B cell (primary cell): ENCODE measurements at regions of chr13 and their contacts with region 1.

Region 1: GRCh38 chr13:30355384-30355699 is 48.0 kb upstream of the KATNAL1 start:
- DNase-seq: peak; percentile 83
- ATAC-seq: peak; percentile 96
- H3K4me3 ChIP-seq: peak overlapping the region in 1 of 5 experiments; percentile 12
- H3K4me3 Mint-ChIP-seq: peak overlapping the region; percentile 72
- H3K27ac ChIP-seq: no peak overlapping the region
- H3K27ac Mint-ChIP-seq: peak overlapping the region; percentile 60
- H3K4me1 ChIP-seq: peaks cover 21 to 32% of the 10 kb centered on the region in 2 donors
- H3K4me1 Mint-ChIP-seq: peaks cover 30% of the 10 kb centered on the region
- H3K27me3 ChIP-seq: no peaks in the 10 kb centered on the region
- H3K27me3 Mint-ChIP-seq: no peaks in the 10 kb centered on the region
- CTCF ChIP-seq: peak; percentile 79

Region 2: GRCh38 chr13:29902101-29902952 is 453.0 kb before region 1 on chr13:
- CTCF ChIA-PET with region 1: no interaction called
- POLR2A ChIA-PET with region 1: no interaction called
- intact Hi-C with region 1: no loop called
- DNase-seq: no peak
- ATAC-seq: no peak
- H3K4me3 ChIP-seq: no peak overlapping the region
- H3K4me3 Mint-ChIP-seq: no peak overlapping the region
- H3K27ac ChIP-seq: no peak overlapping the region
- H3K27ac Mint-ChIP-seq: no peak overlapping the region
- H3K4me1 ChIP-seq: no peaks in the 10 kb centered on the region
- H3K4me1 Mint-ChIP-seq: peaks cover 5% of the 10 kb centered on the region
- H3K27me3 ChIP-seq: peaks cover 0 to 3% (median 0%) of the 10 kb centered on the region in 4 experiments
- H3K27me3 Mint-ChIP-seq: peaks cover 32% of the 10 kb centered on the region
- CTCF ChIP-seq: no peak

Region 3: GRCh38 chr13:30306762-30307193 is 48.6 kb before region 1 on chr13:
- CTCF ChIA-PET with region 1: no interaction called
- POLR2A ChIA-PET with region 1: interaction called, 3 read pairs
- intact Hi-C with region 1: loop called (anchors 2 kb)
- DNase-seq: peak; percentile 96
- ATAC-seq: peak; percentile 89
- H3K4me3 ChIP-seq: peak overlapping the region; percentile 70 to 97 (median 83)
- H3K4me3 Mint-ChIP-seq: peak overlapping the region; percentile 85
- H3K27ac ChIP-seq: peak overlapping the region; percentile 71 to 87
- H3K27ac Mint-ChIP-seq: peak overlapping the region; percentile 86
- H3K4me1 ChIP-seq: peaks cover 28 to 45% of the 10 kb centered on the region in 2 donors
- H3K4me1 Mint-ChIP-seq: peaks cover 55% of the 10 kb centered on the region
- H3K27me3 ChIP-seq: no peaks in the 10 kb centered on the region
- H3K27me3 Mint-ChIP-seq: no peaks in the 10 kb centered on the region
- CTCF ChIP-seq: no peak

Region 4: GRCh38 chr13:30395192-30396084 is 40.1 kb after region 1 on chr13:
- CTCF ChIA-PET with region 1: interaction called, 7 read pairs
- POLR2A ChIA-PET with region 1: no interaction called
- intact Hi-C with region 1: loop called (anchors 1 kb)
- DNase-seq: peak; percentile 86
- ATAC-seq: peak; percentile 79
- H3K4me3 ChIP-seq: peak overlapping the region; percentile 62 to 96 (median 77)
- H3K4me3 Mint-ChIP-seq: peak overlapping the region; percentile 98
- H3K27ac ChIP-seq: peak overlapping the region; percentile 92
- H3K27ac Mint-ChIP-seq: peak overlapping the region; percentile 99
- H3K4me1 ChIP-seq: peaks cover 10 to 15% of the 10 kb centered on the region in 2 donors
- H3K4me1 Mint-ChIP-seq: peaks cover 24% of the 10 kb centered on the region
- H3K27me3 ChIP-seq: no peaks in the 10 kb centered on the region
- H3K27me3 Mint-ChIP-seq: no peaks in the 10 kb centered on the region
- CTCF ChIP-seq: no peak

Region 5: GRCh38 chr13:30422054-30422839 is 66.9 kb after region 1 on chr13 and contains the start of gene UBE2L5:
- CTCF ChIA-PET with region 1: interaction called, 6 read pairs
- POLR2A ChIA-PET with region 1: interaction called, 3 read pairs
- intact Hi-C with region 1: loop called (anchors 2 kb)
- DNase-seq: peak; percentile 85
- ATAC-seq: peak; percentile 93
- H3K4me3 ChIP-seq: peak within 1 kb of the TSS; percentile 57 to 83 (median 77)
- H3K4me3 Mint-ChIP-seq: peak within 1 kb of the TSS; percentile 92
- H3K27ac ChIP-seq: peak within 1 kb of the TSS; percentile 45 to 71
- H3K27ac Mint-ChIP-seq: peak within 1 kb of the TSS; percentile 90
- H3K4me1 ChIP-seq: peaks cover 18 to 42% of the 10 kb centered on the region in 2 donors
- H3K4me1 Mint-ChIP-seq: peaks cover 47% of the 10 kb centered on the region
- H3K27me3 ChIP-seq: no peaks in the 10 kb centered on the region
- H3K27me3 Mint-ChIP-seq: no peaks in the 10 kb centered on the region
- CTCF ChIP-seq: no peak
- total RNA-seq, gene UBE2L5: 0.57 and 0.58 TPM in 2 replicates

Region 6: DNA sequence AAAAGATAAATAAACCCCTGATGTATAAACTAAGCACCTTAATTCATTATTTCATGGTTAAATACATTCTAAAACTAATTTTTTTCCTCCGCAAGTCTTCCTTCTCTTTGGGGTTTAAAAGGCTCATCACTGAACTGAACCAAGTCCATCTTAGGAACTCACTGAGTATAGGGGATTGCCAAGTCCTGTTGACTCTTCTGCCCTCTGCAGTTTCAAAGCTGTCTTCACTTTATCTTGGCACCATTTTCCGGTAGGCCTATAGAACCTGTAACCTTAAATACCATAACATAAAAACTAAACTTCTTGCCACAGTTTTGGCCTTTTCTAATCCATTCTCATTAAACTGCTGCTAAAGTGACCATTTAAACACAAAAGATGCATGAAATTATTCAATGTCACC is 195.8 kb after region 1 on chr13:
- CTCF ChIA-PET with region 1: interaction called, 3 read pairs
- POLR2A ChIA-PET with region 1: no interaction called
- intact Hi-C with region 1: loop called (anchors 1 kb)
- DNase-seq: peak; percentile 64
- ATAC-seq: peak; percentile 84
- H3K4me3 ChIP-seq: no peak overlapping the region
- H3K4me3 Mint-ChIP-seq: no peak overlapping the region
- H3K27ac ChIP-seq: no peak overlapping the region
- H3K27ac Mint-ChIP-seq: no peak overlapping the region
- H3K4me1 ChIP-seq: peaks cover 8% of the 10 kb centered on the region in 2 donors
- H3K4me1 Mint-ChIP-seq: peaks cover 7% of the 10 kb centered on the region
- H3K27me3 ChIP-seq: no peaks in the 10 kb centered on the region
- H3K27me3 Mint-ChIP-seq: no peaks in the 10 kb centered on the region
- CTCF ChIP-seq: peak; percentile 61

Region 7: GRCh38 chr13:30572859-30573275 is 217.5 kb after region 1 on chr13:
- CTCF ChIA-PET with region 1: no interaction called
- POLR2A ChIA-PET with region 1: no interaction called
- intact Hi-C with region 1: loop called (anchors 1 kb)
- DNase-seq: peak; percentile 64
- ATAC-seq: peak; percentile 77
- H3K4me3 ChIP-seq: peak overlapping the region in 4 of 5 experiments; percentile 27 to 65 (median 35)
- H3K4me3 Mint-ChIP-seq: peak overlapping the region; percentile 75
- H3K27ac ChIP-seq: peak overlapping the region; percentile 55 to 81
- H3K27ac Mint-ChIP-seq: peak overlapping the region; percentile 68
- H3K4me1 ChIP-seq: peaks cover 5 to 8% of the 10 kb centered on the region in 2 donors
- H3K4me1 Mint-ChIP-seq: peaks cover 26% of the 10 kb centered on the region
- H3K27me3 ChIP-seq: peaks cover 0 to 3% (median 0%) of the 10 kb centered on the region in 4 experiments
- H3K27me3 Mint-ChIP-seq: no peaks in the 10 kb centered on the region
- CTCF ChIP-seq: peak; percentile 28

Region 8: GRCh38 chr13:30802953-30803478 is 447.7 kb after region 1 on chr13:
- CTCF ChIA-PET with region 1: interaction called, 4 read pairs
- POLR2A ChIA-PET with region 1: no interaction called
- intact Hi-C with region 1: loop called (anchors 1 kb)
- DNase-seq: peak; percentile 87
- ATAC-seq: peak; percentile 99
- H3K4me3 ChIP-seq: peak overlapping the region in 3 of 5 experiments; percentile 18 to 37 (median 21)
- H3K4me3 Mint-ChIP-seq: peak overlapping the region; percentile 80
- H3K27ac ChIP-seq: no peak overlapping the region
- H3K27ac Mint-ChIP-seq: no peak overlapping the region
- H3K4me1 ChIP-seq: peaks cover 8 to 9% of the 10 kb centered on the region in 2 donors
- H3K4me1 Mint-ChIP-seq: peaks cover 11% of the 10 kb centered on the region
- H3K27me3 ChIP-seq: peaks cover 0 to 8% (median 0%) of the 10 kb centered on the region in 4 experiments
- H3K27me3 Mint-ChIP-seq: no peaks in the 10 kb centered on the region
- CTCF ChIP-seq: peak; percentile 98